ENCODE measurements at regions of chr5 and their contacts with region 1.

Region 1: DNA sequence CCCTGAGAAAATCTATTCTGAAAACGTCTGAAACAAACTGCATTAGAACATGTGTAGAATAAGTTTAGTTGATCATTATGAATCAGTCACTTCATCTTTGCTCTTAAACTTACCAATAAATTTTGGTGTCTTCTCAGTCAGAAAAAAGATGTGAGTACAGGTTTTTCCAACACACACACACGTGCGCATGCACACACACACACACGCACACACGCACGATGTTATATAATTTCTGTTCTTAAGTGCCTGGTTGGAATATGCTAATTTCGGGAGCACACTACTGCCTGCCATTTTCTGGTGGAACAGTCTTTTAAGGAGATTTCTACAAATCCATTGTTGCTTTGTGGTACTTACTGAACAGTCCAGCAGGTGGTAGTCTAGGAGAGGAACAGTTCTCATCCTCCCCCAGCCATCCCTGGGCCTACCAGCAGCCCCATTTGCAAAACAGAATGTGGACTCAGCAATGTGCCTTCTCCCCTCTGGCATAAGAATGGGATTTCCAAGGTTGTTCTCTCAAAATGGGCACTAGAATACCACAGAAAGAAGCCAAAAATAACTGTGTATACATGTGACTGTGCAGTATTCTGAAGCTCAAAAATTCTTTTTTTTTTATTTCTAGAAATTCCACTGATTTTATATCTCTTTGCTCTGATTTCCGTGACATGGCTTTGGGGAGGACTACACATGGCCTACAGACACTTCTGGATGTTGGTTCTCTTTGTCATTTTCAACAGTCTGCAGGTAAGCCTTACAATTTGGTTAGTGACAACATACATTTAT is 281.3 kb downstream of the ARRDC3 start:
- DNase-seq: peak; percentile 49 to 72
- ATAC-seq: peak; percentile 95 to 100 (median 99)
- H3K4me3 ChIP-seq: no peak overlapping the region
- H3K4me3 Mint-ChIP-seq: no peak overlapping the region
- H3K27ac ChIP-seq: no peak overlapping the region
- H3K27ac Mint-ChIP-seq: no peak overlapping the region
- H3K4me1 ChIP-seq: no peaks in the 10 kb centered on the region
- H3K4me1 Mint-ChIP-seq: peaks cover 8 to 9% of the 10 kb centered on the region in 2 donors
- H3K27me3 ChIP-seq: no peaks in the 10 kb centered on the region
- H3K27me3 Mint-ChIP-seq: peaks cover 8 to 12% of the 10 kb centered on the region in 2 donors
- CTCF ChIP-seq: peak; percentile 63

Region 2: DNA sequence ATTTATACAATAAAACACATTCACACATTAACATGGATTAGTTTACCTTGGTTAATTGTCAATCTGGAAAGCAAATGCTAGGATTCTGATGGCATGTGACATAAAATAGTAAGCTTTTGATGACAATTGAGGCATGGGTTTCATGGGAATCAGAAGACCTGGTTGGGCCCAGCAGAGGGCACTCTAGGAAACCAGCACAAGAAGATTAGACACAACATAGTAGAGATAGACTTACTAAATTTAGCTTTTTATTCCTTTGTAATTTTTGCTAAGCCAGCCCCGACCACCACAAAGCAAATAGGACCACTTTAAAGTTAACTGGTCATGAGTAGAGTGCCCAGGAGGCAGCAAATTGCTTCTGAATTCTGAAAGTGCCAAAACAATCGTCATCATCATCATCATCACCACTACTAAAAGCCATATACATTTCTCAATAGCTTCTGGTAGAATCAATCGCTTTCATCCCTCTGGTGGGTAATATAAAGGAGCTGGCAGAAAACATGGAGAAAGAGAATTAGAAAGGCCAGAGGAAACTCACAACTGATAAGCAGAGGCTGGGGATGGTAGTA is 118.1 kb after region 1 on chr5:
- intact Hi-C with region 1: loop called (anchors 5 kb)
- DNase-seq: peak in 1 of 2 donors; percentile 57
- ATAC-seq: peak in 2 of 3 donors; percentile 60 to 73
- H3K4me3 ChIP-seq: no peak overlapping the region
- H3K4me3 Mint-ChIP-seq: no peak overlapping the region
- H3K27ac ChIP-seq: no peak overlapping the region
- H3K27ac Mint-ChIP-seq: peak overlapping the region in 1 of 2 donors; percentile 29
- H3K4me1 ChIP-seq: no peaks in the 10 kb centered on the region
- H3K4me1 Mint-ChIP-seq: peaks cover 6% of the 10 kb centered on the region in 2 donors
- H3K27me3 ChIP-seq: no peaks in the 10 kb centered on the region
- H3K27me3 Mint-ChIP-seq: peaks cover 4 to 9% of the 10 kb centered on the region in 2 donors
- CTCF ChIP-seq: peak; percentile 21

Measured in natural killer cell (primary cell).